Left ventricle myocardium inferior (tissue), 1 donor: ENCODE measurements at regions of chr3 and their contacts with region 1.

Region 1: GRCh38 chr3:29525254-29525881 is 244.5 kb downstream of the RBMS3 start:
- DNase-seq: peak; percentile 30
- H3K4me3 ChIP-seq: peak overlapping the region; percentile 3
- H3K27ac ChIP-seq: peak overlapping the region; percentile 77
- H3K4me1 ChIP-seq: peaks cover 62% of the 10 kb centered on the region
- H3K27me3 ChIP-seq: no peaks in the 10 kb centered on the region
- CTCF ChIP-seq: no peak

Region 2: DNA sequence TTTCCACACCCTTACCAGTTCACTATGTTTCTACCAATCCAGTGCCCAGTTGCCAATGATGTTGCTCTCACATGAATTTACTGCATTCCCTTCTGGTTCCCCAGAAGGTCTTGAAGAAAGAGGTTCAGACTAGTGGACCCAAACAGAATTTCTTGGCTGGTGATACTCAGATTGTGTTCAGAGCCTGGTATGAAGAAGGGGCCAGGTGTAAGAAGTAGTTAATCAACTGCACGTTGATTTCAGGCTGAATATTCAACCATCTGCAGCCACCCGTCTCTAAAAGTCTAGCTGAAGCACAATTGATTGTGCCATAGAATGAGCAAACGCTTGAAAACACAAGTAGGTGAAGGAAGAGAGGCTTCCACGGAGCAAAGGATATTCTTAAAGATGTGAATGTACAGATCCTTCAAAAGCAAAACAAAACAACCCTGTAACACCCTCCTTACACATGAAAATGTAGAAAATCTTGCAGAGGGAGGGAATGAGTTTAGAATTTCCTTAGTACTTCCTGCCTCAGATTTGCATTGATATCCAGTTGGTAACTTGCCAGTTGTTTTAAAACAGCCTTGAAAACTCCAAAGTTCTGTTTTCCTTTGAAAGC is 239.8 kb before region 1 on chr3:
- intact Hi-C with region 1: no loop called
- DNase-seq: no peak
- H3K4me3 ChIP-seq: peak overlapping the region; percentile 80
- H3K27ac ChIP-seq: peak overlapping the region; percentile 80
- H3K4me1 ChIP-seq: peaks cover 80% of the 10 kb centered on the region
- H3K27me3 ChIP-seq: no peaks in the 10 kb centered on the region
- CTCF ChIP-seq: no peak

Region 3: GRCh38 chr3:29440413-29441305 is 84.7 kb before region 1 on chr3:
- intact Hi-C with region 1: no loop called
- DNase-seq: no peak
- H3K4me3 ChIP-seq: peak overlapping the region; percentile 56
- H3K27ac ChIP-seq: peak overlapping the region; percentile 45
- H3K4me1 ChIP-seq: peaks cover 20% of the 10 kb centered on the region
- H3K27me3 ChIP-seq: no peaks in the 10 kb centered on the region
- CTCF ChIP-seq: no peak

Region 4: DNA sequence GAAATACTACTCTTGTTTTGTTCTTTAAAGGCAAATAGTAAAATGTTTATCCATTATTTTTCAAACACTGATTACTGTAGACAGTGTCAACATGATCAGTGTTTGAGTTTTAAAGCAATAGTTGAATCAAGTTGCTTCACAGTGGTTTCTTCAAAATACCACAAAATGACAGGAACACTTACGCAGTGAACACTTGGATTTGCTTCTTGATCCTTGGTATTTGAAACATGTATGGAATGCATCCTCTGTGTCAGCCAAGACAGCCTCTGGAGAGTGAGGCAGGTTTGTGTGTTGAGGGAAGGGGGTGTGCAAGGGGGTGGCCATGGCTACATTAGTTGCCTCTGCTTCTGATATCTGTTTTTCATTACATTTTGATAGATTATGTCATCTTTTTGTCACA is 168.5 kb after region 1 on chr3:
- intact Hi-C with region 1: loop called (anchors 10 kb)
- DNase-seq: no peak
- H3K4me3 ChIP-seq: no peak overlapping the region
- H3K27ac ChIP-seq: peak overlapping the region; percentile 85
- H3K4me1 ChIP-seq: peaks cover 61% of the 10 kb centered on the region
- H3K27me3 ChIP-seq: no peaks in the 10 kb centered on the region
- CTCF ChIP-seq: no peak

Region 5: GRCh38 chr3:29718661-29719065 is 193.3 kb after region 1 on chr3:
- intact Hi-C with region 1: no loop called
- DNase-seq: no peak
- H3K4me3 ChIP-seq: no peak overlapping the region
- H3K27ac ChIP-seq: no peak overlapping the region
- H3K4me1 ChIP-seq: peaks cover 16% of the 10 kb centered on the region
- H3K27me3 ChIP-seq: no peaks in the 10 kb centered on the region
- CTCF ChIP-seq: no peak

Region 6: DNA sequence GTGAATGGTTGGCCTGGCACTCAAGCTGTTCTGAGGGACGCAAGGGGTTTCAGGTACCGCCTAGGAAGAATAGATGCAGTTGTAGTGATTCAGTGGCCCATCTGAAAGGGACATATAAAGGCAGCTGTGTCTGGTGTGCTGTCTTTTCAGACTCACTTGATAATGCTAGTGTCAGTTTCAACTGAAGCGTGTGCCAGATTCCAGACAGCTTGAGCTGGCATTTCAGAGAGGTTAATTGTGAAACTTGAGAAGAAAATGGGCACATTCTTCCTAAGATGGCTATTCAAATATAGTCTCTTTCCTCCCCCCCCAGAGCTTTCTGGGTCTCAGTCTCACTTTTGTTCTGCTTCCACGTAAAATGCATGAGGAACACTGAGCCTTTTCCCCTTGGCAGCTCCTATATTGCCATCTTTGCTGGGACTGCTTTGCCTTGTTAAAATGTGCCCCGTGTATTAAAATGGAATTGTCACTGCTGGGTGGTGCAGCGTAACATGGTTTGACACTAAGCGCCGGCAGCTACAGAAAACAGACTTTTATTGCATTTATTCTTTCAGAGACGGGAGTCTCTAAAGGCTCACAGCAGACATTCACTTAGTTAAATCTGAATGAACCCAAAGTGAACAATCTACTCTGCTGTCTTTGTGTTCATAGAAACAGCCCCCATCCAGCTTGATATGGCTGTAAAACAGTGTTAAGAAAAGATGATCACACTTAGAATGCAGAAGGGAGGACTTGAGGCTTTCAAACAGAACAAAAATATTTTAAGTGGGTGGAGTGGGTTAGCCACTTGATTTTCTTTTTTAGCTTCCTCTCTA is 234.2 kb after region 1 on chr3:
- intact Hi-C with region 1: loop called (anchors 10 kb)
- DNase-seq: no peak
- H3K4me3 ChIP-seq: peak overlapping the region; percentile 32
- H3K27ac ChIP-seq: peak overlapping the region; percentile 81
- H3K4me1 ChIP-seq: peaks cover 65% of the 10 kb centered on the region
- H3K27me3 ChIP-seq: no peaks in the 10 kb centered on the region
- CTCF ChIP-seq: no peak